ENCODE measurements at regions of chr2 and their contacts with region 1.

Region 1: DNA sequence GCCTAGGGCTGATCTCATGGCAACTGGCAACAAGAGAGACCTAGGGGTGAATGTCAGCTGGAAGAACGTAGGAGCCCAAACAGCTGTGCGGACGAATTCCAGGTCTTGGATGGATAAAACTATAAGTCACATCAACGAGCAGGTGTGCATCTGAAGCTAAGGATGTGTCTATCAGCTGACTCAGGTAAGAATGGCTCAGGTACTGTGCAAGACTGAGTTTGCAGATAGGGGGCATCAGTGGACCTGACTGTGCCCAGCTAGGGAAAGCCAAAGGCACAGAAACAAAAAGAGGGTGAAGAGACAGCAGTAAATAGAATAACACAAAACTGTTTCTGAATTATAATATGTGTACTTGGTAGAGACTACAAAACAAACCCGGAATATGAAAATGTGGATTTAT is 357.3 kb downstream of the ZEB2 start:
- DNase-seq: peak; percentile 17
- CTCF ChIP-seq: peak; percentile 60

Region 2: DNA sequence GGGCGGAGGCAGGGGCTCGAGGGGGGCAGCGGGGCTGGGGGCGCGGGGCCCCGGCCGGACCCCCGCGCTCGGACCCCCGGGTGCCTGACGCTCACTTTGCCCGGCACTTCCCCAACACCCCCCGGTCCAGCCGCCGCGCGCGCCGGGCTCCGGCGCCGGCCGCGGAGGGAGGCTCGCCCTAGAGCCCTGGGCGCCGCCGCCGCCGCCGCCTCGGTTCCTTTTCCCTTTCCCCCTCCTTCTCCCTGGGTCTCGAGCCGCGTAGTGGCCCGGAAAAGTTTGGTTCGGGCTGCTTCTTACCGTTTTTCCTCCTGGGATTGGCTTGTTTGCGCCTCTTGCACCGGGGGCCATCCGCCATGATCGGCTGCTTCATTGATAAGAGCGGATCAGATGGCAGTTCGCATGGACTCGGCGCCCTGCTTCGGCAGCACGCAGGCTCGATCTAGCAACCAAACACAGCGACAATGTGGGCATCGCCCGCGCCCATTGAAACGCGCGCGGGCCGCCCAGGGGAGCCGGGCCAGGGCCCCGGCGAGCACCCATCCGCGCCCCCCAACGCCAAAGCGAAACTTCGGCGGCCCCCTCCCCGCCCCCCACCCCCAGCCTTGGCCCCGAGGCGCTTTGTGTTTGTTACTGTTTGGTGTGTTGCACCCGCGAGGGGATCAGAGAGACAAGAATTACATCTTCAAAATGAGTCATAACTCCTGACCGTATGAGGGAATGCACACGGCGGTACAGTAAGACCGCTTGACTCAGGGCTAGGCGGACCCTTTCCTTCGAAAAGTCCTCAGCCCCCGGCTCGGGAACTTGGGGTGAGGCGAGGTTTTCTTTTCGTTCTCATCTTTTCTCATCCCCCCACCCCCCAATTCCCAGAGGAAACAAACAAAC is 354.6 kb after region 1 on chr2:
- in situ Hi-C with region 1: loop called (anchors 10 kb)
- DNase-seq: peak; percentile 76
- CTCF ChIP-seq: no peak